ENCODE measurements at regions of chr2 and their contacts with region 1.

Region 1: DNA sequence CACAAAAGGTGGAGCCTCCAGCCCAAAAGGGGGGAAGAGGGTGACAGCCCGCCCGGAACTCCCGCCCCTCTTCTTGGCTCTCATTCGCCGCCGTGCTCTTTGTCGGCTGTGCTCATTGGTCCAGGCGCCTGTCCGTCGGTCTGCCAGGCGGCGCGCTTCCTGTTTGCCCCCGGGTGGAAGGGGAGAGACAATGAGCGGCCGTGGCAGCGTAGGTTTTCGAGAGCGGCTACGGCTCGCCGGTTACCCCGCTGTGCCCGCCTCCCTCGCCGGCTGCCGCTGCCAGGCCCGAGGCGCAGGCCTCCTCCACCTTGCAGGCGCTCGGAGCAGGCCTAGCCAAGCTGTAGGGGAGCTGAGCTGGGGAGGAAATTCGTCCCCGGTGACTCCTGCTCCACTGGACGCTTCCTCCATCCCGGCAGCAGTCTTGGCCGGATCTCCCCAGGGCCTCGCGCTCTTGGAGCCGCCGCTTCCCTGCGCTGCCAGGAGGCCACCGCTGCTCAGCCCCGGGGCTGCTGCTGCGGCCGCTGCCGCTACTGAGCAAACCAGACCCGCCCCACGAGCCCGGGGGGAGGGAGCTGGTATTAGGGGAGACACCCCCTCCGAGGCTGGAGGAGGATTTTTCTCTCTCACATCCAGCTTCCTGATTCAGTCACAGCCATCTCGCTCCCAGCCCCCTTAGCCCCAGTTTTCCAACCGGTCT is at the start of gene SP3:
- DNase-seq: peak; percentile 98
- H3K4me3 ChIP-seq: peak within 1 kb of the TSS; percentile 87 to 92 (median 91)
- H3K27ac ChIP-seq: peak within 1 kb of the TSS; percentile 90
- H3K4me1 ChIP-seq: peaks cover 19% of the 10 kb centered on the region
- H3K27me3 ChIP-seq: no peaks in the 10 kb centered on the region
- CTCF ChIP-seq: no peak
- POLR2A ChIP-seq: peak; percentile 90
- total RNA-seq, gene SP3: 59.0 and 60.1 TPM in 2 replicates

Region 2: GRCh38 chr2:173884025-173884802 is 81.3 kb before region 1 on chr2:
- CTCF ChIA-PET with region 1: interaction called, 6 read pairs
- POLR2A ChIA-PET with region 1: no interaction called
- dilution Hi-C with region 1: no loop called
- intact Hi-C with region 1: loop called (anchors 1 kb)
- DNase-seq: peak; percentile 64
- H3K4me3 ChIP-seq: no peak overlapping the region
- H3K27ac ChIP-seq: no peak overlapping the region
- H3K4me1 ChIP-seq: no peaks in the 10 kb centered on the region
- H3K27me3 ChIP-seq: peaks cover 19 to 24% of the 10 kb centered on the region in 2 experiments
- CTCF ChIP-seq: peak; percentile 68 to 70
- POLR2A ChIP-seq: no peak

Region 3: GRCh38 chr2:173926875-173927274 is 38.6 kb before region 1 on chr2:
- CTCF ChIA-PET with region 1: no interaction called
- POLR2A ChIA-PET with region 1: no interaction called
- dilution Hi-C with region 1: no loop called
- intact Hi-C with region 1: loop called (anchors 1 kb)
- DNase-seq: no peak
- H3K4me3 ChIP-seq: no peak overlapping the region
- H3K27ac ChIP-seq: no peak overlapping the region
- H3K4me1 ChIP-seq: no peaks in the 10 kb centered on the region
- H3K27me3 ChIP-seq: no peaks in the 10 kb centered on the region
- CTCF ChIP-seq: no peak
- POLR2A ChIP-seq: no peak

Region 4: GRCh38 chr2:174009488-174010223 is 44.2 kb after region 1 on chr2:
- CTCF ChIA-PET with region 1: interaction called, 3 read pairs
- POLR2A ChIA-PET with region 1: no interaction called
- dilution Hi-C with region 1: no loop called
- intact Hi-C with region 1: loop called (anchors 2 kb)
- DNase-seq: peak; percentile 68
- H3K4me3 ChIP-seq: no peak overlapping the region
- H3K27ac ChIP-seq: no peak overlapping the region
- H3K4me1 ChIP-seq: peaks cover 12% of the 10 kb centered on the region
- H3K27me3 ChIP-seq: no peaks in the 10 kb centered on the region
- CTCF ChIP-seq: no peak
- POLR2A ChIP-seq: no peak

Region 5: DNA sequence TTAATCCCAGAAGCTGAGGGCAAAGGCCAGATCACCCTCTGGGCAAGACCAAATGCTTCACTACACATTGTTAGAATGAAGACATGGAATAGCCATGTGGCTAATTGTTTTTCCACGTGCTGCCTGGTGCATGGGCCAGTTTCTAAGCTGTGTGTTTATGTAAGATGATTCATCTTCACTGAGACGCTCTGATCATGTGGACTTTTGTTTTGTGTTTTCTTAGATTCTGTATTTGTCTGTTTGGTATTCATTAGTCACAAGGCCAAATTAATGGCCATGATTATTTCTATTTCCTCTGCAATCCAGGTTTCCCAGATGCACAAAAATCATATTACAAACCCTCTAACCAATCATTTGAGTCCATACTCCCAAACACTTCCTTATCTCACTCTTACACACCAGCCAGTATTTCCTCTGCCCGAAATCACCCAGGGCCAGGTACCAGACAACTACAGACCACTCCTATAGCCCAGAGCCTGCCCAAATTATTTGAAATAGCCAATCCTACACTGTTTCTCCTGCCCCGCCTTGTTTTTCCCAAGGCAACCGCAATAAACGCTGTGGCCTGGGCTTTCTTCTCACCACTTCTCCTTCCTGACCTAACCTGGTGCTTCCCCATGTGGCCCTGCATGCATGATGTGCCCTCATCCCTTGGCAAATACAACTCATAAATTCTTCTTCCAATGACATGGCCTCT is 93.8 kb after region 1 on chr2:
- CTCF ChIA-PET with region 1: no interaction called
- POLR2A ChIA-PET with region 1: no interaction called
- dilution Hi-C with region 1: no loop called
- intact Hi-C with region 1: loop called (anchors 1 kb)
- DNase-seq: peak; percentile 96
- H3K4me3 ChIP-seq: no peak overlapping the region
- H3K27ac ChIP-seq: peak overlapping the region; percentile 65
- H3K4me1 ChIP-seq: peaks cover 15% of the 10 kb centered on the region
- H3K27me3 ChIP-seq: peaks cover 0 to 2% of the 10 kb centered on the region in 2 experiments
- CTCF ChIP-seq: no peak
- POLR2A ChIP-seq: no peak

Region 6: GRCh38 chr2:174248187-174248997 is 282.9 kb after region 1 on chr2 and contains the start of gene OLA1:
- CTCF ChIA-PET with region 1: no interaction called
- POLR2A ChIA-PET with region 1: interaction called, 3 read pairs
- dilution Hi-C with region 1: no loop called
- intact Hi-C with region 1: loop called (anchors 1 kb)
- DNase-seq: peak; percentile 94
- H3K4me3 ChIP-seq: peak within 1 kb of the TSS; percentile 38 to 88 (median 77)
- H3K27ac ChIP-seq: peak within 1 kb of the TSS; percentile 70
- H3K4me1 ChIP-seq: peaks cover 21% of the 10 kb centered on the region
- H3K27me3 ChIP-seq: no peaks in the 10 kb centered on the region
- CTCF ChIP-seq: no peak
- POLR2A ChIP-seq: peak; percentile 90
- total RNA-seq, gene OLA1: 93.9 and 99.6 TPM in 2 replicates